ENCODE measurements at regions of chr11 and their contacts with region 1.

Region 1: GRCh38 chr11:120335908-120336640 is at the start of gene ARHGEF12:
- DNase-seq: peak; percentile 30 to 86 (median 62)
- ATAC-seq: peak; percentile 42
- H3K4me3 ChIP-seq: peak within 1 kb of the TSS; percentile 77
- H3K4me3 Mint-ChIP-seq: peak within 1 kb of the TSS; percentile 89
- H3K27ac ChIP-seq: no peak within 1 kb of the TSS
- H3K27ac Mint-ChIP-seq: no peak within 1 kb of the TSS
- H3K4me1 ChIP-seq: peaks cover 26% of the 10 kb centered on the region
- H3K4me1 Mint-ChIP-seq: peaks cover 30% of the 10 kb centered on the region
- H3K27me3 ChIP-seq: peaks cover 27 to 53% of the 10 kb centered on the region in 2 experiments
- H3K27me3 Mint-ChIP-seq: peaks cover 67% of the 10 kb centered on the region
- CTCF ChIP-seq: no peak
- total RNA-seq, gene ARHGEF12: 3.6 TPM

Region 2: DNA sequence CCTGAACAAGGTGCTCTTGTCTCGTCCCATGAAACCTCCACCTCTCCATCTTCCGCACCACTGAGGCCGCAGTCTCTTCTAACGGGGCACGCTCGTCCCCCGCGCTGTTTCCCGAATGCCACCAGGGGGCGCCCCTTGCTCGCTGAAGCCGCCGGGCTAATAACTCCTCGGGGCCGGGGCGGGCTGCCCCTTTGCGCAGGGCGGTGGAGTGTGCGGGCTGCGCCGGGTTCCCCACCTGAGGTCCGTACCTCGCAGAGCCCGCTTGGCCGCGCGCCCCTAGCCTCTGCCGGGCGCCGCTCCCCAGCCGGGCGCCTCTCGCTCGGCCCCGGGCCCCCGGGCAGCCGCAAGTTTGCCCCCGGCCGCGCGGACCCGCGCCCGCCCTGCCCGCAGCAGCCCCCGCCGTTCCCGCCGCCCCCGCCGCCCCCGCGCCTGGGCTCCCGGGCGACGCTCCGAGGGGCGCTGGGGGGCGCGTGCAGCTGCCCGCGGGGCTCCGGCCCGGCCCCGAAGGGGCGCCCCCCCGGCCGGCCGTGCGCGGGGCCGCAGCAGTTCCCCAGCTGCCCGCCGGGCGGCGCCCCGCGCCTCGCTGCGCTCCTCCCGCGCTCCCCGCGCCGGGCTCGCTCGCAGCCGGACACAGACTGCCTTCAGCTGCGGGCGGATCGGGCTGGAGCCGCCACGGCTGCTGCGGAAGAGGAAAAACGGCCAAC is 175.2 kb after region 1 on chr11 and contains the start of gene GRIK4:
- CTCF ChIA-PET with region 1: no interaction called
- POLR2A ChIA-PET with region 1: no interaction called
- intact Hi-C with region 1: loop called in 1 of 2 experiments (anchors 5 kb)
- DNase-seq: peak; percentile 36 to 79 (median 62)
- ATAC-seq: peak; percentile 69
- H3K4me3 ChIP-seq: no peak within 1 kb of the TSS
- H3K4me3 Mint-ChIP-seq: peak within 1 kb of the TSS; percentile 30
- H3K27ac ChIP-seq: no peak within 1 kb of the TSS
- H3K27ac Mint-ChIP-seq: no peak within 1 kb of the TSS
- H3K4me1 ChIP-seq: no peaks in the 10 kb centered on the region
- H3K4me1 Mint-ChIP-seq: no peaks in the 10 kb centered on the region
- H3K27me3 ChIP-seq: peaks cover 38 to 57% of the 10 kb centered on the region in 2 experiments
- H3K27me3 Mint-ChIP-seq: peaks cover 91% of the 10 kb centered on the region
- CTCF ChIP-seq: peak; percentile 78
- total RNA-seq, gene GRIK4: not detected

Region 3: GRCh38 chr11:120801801-120802689 is 466.0 kb after region 1 on chr11:
- CTCF ChIA-PET with region 1: no interaction called
- POLR2A ChIA-PET with region 1: no interaction called
- intact Hi-C with region 1: loop called in 1 of 2 experiments (anchors 2 kb)
- DNase-seq: peak; percentile 8 to 58 (median 22)
- ATAC-seq: no peak
- H3K4me3 ChIP-seq: no peak overlapping the region
- H3K4me3 Mint-ChIP-seq: no peak overlapping the region
- H3K27ac ChIP-seq: no peak overlapping the region
- H3K27ac Mint-ChIP-seq: no peak overlapping the region
- H3K4me1 ChIP-seq: no peaks in the 10 kb centered on the region
- H3K4me1 Mint-ChIP-seq: no peaks in the 10 kb centered on the region
- H3K27me3 ChIP-seq: peaks cover 7 to 8% of the 10 kb centered on the region in 2 experiments
- H3K27me3 Mint-ChIP-seq: peaks cover 47% of the 10 kb centered on the region
- CTCF ChIP-seq: peak; percentile 95

Region 4: DNA sequence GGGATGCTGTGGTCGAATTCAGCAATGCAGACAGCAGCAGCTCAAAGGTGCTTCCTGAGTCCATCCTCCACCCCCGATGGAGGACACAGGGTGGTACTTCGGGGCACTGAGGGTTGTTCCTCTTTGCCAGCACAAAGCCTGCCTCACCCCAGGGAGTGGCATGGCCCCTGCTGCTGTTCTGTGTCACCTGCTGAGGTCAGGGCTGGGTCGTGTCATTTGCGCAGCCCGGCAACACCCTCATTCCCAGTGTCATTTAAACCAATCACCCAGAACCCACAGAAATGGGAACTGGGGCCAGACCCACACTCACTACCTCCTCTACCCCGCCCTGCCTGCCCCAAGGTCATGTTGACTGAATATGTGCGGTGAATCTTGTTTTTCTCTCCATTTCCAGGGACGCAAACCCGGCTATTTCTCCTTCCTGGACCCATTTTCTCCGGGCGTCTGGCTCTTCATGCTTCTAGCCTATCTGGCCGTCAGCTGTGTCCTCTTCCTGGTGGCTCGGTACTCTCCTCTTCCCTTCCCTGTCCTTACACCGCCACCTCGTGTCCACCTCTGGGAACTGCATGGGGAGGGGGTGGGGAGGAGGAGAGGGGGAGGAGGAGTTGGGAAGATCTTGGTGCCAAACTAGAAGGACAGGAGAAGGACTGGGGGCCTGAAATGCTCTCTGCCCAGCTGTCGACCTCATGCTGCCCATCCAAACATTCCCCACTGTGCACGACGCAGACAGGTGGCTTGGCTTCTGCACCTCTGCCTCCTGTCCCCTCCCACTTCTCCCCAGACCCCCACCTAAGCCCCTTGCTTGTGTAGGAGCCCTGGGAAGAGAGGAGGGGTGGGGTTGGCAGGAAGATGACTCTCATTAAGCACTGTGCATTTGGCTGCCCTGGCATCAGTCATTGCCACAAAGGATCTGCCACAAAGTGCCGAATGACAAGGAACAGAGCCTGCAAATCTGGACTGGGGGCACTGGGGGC is 616.7 kb after region 1 on chr11:
- CTCF ChIA-PET with region 1: no interaction called
- POLR2A ChIA-PET with region 1: no interaction called
- intact Hi-C with region 1: loop called in 1 of 2 experiments (anchors 2 kb)
- DNase-seq: peak; percentile 14 to 72 (median 51)
- ATAC-seq: peak; percentile 79
- H3K4me3 ChIP-seq: peak overlapping the region; percentile 32
- H3K4me3 Mint-ChIP-seq: peak overlapping the region; percentile 56
- H3K27ac ChIP-seq: no peak overlapping the region
- H3K27ac Mint-ChIP-seq: no peak overlapping the region
- H3K4me1 ChIP-seq: peaks cover 20% of the 10 kb centered on the region
- H3K4me1 Mint-ChIP-seq: peaks cover 17% of the 10 kb centered on the region
- H3K27me3 ChIP-seq: peaks cover 6 to 15% of the 10 kb centered on the region in 2 experiments
- H3K27me3 Mint-ChIP-seq: peaks cover 51% of the 10 kb centered on the region
- CTCF ChIP-seq: peak; percentile 43

Region 5: DNA sequence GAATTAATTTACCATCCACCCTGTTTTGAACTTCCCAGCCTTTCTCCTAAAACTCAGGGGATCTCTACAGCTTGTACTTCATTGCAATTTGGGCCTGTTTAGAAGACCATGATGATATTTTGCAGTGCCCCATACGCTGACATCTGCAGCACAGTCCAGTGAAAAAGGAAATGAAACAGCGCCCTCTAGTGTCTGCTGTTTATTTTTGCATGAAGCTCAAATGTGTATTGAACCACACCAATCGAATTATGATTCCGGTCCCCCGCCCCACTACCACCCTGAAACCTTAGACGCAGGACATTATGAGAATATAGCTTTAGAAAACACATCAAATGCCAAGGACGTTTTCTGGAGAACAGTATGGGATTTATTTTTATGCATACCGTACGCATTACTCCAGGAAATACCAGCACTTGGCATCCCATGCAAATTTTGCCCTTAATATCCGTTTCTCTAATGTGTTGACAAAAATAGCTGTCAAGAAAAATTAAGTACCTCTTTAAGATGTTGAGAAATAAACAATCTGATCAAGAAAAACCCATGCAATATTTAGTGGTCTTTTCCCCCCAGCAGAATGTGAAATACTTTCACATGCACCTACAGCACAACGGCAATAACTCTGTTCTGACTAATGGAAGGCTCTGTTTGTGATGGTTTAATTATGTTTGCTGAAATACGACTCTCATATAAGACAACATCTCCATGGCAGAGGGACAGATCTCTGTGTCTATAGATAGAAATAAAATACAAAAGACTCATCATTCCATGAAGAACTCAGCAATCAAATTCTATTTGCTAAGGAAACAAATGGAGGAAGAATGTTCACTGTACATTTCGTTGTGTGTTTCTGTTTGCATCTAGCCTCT is 858.9 kb after region 1 on chr11:
- CTCF ChIA-PET with region 1: interaction called, 5 read pairs
- POLR2A ChIA-PET with region 1: no interaction called
- intact Hi-C with region 1: loop called in 1 of 2 experiments (anchors 2 kb)
- DNase-seq: peak in 13 of 14 experiments; percentile 5 to 81 (median 41)
- ATAC-seq: peak; percentile 51
- H3K4me3 ChIP-seq: no peak overlapping the region
- H3K4me3 Mint-ChIP-seq: no peak overlapping the region
- H3K27ac ChIP-seq: no peak overlapping the region
- H3K27ac Mint-ChIP-seq: no peak overlapping the region
- H3K4me1 ChIP-seq: no peaks in the 10 kb centered on the region
- H3K4me1 Mint-ChIP-seq: no peaks in the 10 kb centered on the region
- H3K27me3 ChIP-seq: peaks cover 2 to 12% of the 10 kb centered on the region in 2 experiments
- H3K27me3 Mint-ChIP-seq: peaks cover 45% of the 10 kb centered on the region
- CTCF ChIP-seq: peak; percentile 98